Mammary epithelial cell (primary cell): ENCODE measurements at regions of chr7 and their contacts with region 1.

Region 1: DNA sequence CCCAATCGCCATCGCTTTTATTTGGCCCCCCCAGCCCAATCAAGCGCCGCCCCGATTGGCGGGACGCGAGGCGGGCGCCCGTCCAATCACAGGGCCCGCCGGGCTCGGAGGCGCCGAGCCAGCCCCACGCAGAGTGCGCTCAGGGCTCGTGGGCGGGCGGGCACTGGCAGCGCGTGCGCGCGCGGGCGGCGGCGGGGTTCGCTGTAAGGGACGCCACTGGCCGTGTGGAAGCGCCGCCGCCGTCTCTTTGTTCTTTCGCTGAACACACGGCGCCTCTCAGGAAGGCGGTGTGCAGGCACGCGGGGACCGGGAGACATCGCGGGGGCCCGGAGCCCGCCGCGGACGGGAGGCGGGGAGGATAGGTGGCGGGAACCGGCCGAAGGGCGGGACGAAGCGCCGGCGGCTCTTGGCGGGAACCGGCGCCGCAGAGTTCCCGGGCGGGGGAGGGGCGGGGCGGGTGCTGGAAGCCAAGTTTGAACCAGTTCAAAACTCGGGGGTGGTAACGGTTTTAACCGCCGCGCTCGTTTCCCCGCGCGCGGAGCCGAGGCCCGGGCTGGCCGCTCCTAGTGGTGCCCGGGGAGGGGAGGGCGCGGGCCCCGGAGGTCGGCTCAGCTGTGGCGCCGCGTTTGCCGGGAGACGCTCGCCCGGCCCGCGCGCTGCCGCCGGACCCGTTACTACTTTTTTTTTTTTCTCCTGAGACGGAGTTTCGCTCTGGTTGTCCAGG is 370 bp upstream of the EZH2 start:
- DNase-seq: peak; percentile 90
- H3K4me3 ChIP-seq: peak overlapping the region; percentile 82 to 87 (median 87)
- H3K27ac ChIP-seq: peak overlapping the region; percentile 83
- H3K4me1 ChIP-seq: peaks cover 8% of the 10 kb centered on the region
- H3K27me3 ChIP-seq: no peaks in the 10 kb centered on the region
- CTCF ChIP-seq: no peak

Region 2: DNA sequence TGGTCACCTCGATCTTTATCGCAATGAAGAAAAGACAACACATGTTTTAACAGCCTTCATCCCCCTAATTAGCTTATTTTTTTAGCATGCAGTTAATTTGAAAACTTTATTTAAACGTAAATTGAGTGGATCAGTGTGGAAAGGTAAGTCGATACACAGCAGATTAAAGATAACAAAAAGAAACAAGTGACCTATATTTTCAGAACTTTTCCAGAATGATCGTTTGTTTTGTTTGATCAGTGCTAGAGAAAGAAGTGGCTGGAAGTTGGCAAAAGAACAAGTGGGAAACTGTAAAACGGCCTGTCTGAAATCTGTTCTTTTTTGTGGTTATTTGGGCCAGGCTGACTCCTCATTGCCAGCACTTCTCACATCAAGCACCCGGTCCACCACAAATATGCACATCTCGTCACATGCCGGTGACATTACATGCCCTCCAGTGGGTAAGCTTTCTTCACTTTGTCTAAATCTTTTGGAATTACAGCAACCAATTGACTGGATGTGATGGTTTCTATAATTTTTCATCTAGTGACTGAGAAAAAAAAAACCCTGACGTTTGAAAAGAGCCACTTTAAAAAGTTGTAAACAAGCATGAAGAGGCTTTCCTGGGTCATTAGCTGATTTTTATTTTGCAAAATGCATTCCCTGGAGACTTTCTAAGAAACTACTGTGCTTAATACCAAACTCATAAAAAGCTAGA is 260.7 kb before region 1 on chr7:
- CTCF ChIA-PET with region 1: no interaction called
- dilution Hi-C with region 1: no loop called
- in situ Hi-C with region 1: no loop called
- intact Hi-C with region 1: no loop called
- DNase-seq: peak; percentile 36
- H3K4me3 ChIP-seq: no peak overlapping the region
- H3K27ac ChIP-seq: no peak overlapping the region
- H3K4me1 ChIP-seq: peaks cover 11% of the 10 kb centered on the region
- H3K27me3 ChIP-seq: no peaks in the 10 kb centered on the region
- CTCF ChIP-seq: no peak

Region 3: GRCh38 chr7:148819697-148820360 is 64.6 kb before region 1 on chr7:
- CTCF ChIA-PET with region 1: no interaction called
- dilution Hi-C with region 1: no loop called
- in situ Hi-C with region 1: no loop called
- intact Hi-C with region 1: loop called (anchors 5 kb)
- DNase-seq: peak; percentile 14
- H3K4me3 ChIP-seq: no peak overlapping the region
- H3K27ac ChIP-seq: no peak overlapping the region
- H3K4me1 ChIP-seq: peaks cover 9% of the 10 kb centered on the region
- H3K27me3 ChIP-seq: no peaks in the 10 kb centered on the region
- CTCF ChIP-seq: no peak

Region 4: GRCh38 chr7:148901178-148901577 is 16.7 kb after region 1 on chr7:
- CTCF ChIA-PET with region 1: no interaction called
- dilution Hi-C with region 1: no loop called
- in situ Hi-C with region 1: no loop called
- intact Hi-C with region 1: loop called (anchors 2 kb)
- DNase-seq: peak; percentile 88
- H3K4me3 ChIP-seq: no peak overlapping the region
- H3K27ac ChIP-seq: peak overlapping the region; percentile 24
- H3K4me1 ChIP-seq: peaks cover 8% of the 10 kb centered on the region
- H3K27me3 ChIP-seq: no peaks in the 10 kb centered on the region
- CTCF ChIP-seq: no peak

Region 5: DNA sequence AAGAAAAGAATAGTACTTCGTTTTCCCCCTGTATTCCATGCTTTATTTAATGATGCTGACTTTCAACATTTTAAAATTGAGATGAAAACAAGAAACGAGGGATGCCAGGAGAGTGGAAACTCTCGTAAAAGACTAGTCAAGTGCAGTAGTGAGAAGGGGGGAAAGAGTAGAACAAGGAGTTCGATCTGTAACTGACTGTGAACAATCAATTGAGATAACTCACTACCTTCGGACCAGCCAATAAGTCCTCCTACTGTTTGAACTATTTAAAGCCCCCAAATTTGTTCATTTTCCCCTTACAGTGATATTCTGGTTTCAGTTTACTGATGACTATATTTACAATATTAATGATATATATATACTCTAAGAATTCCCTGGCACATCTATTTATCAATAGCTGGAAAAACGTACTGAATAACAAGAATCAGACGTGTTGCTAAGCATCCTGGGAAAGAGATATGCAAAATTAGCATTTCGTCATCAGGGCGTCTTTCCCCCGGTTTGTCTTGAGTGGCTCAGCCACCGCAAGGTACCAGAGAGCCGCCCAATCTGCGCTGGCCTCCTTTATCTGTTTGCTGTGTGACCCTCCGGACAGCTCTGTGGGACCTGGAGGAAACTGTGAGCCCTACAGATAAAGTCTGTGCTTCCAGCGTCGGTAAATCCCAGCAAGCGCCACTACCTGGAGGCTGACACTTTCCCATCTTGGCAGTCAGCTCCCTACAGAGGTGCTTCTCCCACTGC is 102.7 kb after region 1 on chr7:
- CTCF ChIA-PET with region 1: no interaction called
- dilution Hi-C with region 1: no loop called
- in situ Hi-C with region 1: no loop called
- intact Hi-C with region 1: loop called (anchors 5 kb)
- DNase-seq: peak; percentile 81
- H3K4me3 ChIP-seq: peak overlapping the region; percentile 54 to 59 (median 56)
- H3K27ac ChIP-seq: peak overlapping the region; percentile 84
- H3K4me1 ChIP-seq: peaks cover 29% of the 10 kb centered on the region
- H3K27me3 ChIP-seq: no peaks in the 10 kb centered on the region
- CTCF ChIP-seq: no peak